ENCODE measurements at regions of chr1 and their contacts with region 1.

Region 1: DNA sequence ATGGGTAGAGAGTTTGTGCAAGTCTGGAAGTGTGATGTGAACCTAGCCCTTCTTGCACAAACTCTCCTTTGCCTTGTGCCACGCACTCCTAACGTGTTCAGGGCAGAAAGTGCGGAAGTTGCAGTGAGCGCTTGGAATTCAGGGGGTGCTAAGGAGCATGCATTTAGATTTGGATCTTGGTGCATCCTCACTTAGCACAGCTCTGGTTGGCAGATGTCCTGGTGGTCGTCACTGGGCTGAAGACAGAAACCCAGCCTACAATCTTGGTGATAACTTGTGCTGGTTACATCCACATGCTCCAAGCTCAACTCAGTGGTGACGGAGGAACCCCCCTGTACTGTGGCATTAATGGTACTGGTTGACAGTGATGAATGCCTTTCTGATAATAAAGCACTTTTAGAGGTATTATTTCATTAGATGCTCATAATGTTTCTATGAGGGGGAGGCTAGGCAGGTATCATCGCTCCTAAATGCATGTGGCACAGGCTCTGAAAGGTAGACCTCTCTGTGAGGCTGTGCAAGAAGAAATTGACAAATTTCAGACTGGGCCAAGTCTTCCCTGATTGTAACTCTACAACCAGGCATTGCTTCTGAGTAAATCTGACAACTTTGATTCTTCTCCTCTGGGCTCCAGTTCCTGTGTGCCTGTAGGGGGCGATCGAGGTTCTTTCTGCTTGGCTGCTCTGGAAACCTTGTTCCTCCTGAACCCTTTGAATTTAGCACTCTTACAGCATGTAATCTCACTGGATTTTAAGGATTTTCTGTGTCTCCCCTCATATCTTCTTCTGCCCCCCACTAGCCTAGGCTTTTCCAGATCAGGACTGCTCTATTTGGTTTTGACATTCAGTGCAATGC is 40.6 kb downstream of the MAPKAPK2 start:
- DNase-seq: no peak
- H3K4me3 ChIP-seq: no peak overlapping the region
- H3K27me3 ChIP-seq: no peaks in the 10 kb centered on the region
- CTCF ChIP-seq: peak; percentile 79

Region 2: GRCh38 chr1:206674745-206675175 is 50.6 kb before region 1 on chr1:
- CTCF ChIA-PET with region 1: interaction called, 23 read pairs
- POLR2A ChIA-PET with region 1: no interaction called
- DNase-seq: peak; percentile 97
- H3K4me3 ChIP-seq: no peak overlapping the region
- H3K27me3 ChIP-seq: no peaks in the 10 kb centered on the region
- CTCF ChIP-seq: no peak

Region 3: GRCh38 chr1:206706298-206706791 is 19.0 kb before region 1 on chr1:
- CTCF ChIA-PET with region 1: interaction called, 11 read pairs
- POLR2A ChIA-PET with region 1: no interaction called
- DNase-seq: peak; percentile 50
- H3K4me3 ChIP-seq: no peak overlapping the region
- H3K27me3 ChIP-seq: no peaks in the 10 kb centered on the region
- CTCF ChIP-seq: no peak

Measured in BJ (cell line).